ENCODE measurements at regions of chr14 and their contacts with region 1.

Region 1: GRCh38 chr14:20613094-20614037 is 22.2 kb upstream of the RNASE12 start:
- DNase-seq: peak; percentile 79
- ATAC-seq: peak; percentile 86 to 92
- H3K4me3 ChIP-seq: peak overlapping the region; percentile 52
- H3K27ac ChIP-seq: peak overlapping the region; percentile 61
- H3K4me1 ChIP-seq: peaks cover 21% of the 10 kb centered on the region
- H3K27me3 ChIP-seq: no peaks in the 10 kb centered on the region
- CTCF ChIP-seq: peak; percentile 64

Region 2: DNA sequence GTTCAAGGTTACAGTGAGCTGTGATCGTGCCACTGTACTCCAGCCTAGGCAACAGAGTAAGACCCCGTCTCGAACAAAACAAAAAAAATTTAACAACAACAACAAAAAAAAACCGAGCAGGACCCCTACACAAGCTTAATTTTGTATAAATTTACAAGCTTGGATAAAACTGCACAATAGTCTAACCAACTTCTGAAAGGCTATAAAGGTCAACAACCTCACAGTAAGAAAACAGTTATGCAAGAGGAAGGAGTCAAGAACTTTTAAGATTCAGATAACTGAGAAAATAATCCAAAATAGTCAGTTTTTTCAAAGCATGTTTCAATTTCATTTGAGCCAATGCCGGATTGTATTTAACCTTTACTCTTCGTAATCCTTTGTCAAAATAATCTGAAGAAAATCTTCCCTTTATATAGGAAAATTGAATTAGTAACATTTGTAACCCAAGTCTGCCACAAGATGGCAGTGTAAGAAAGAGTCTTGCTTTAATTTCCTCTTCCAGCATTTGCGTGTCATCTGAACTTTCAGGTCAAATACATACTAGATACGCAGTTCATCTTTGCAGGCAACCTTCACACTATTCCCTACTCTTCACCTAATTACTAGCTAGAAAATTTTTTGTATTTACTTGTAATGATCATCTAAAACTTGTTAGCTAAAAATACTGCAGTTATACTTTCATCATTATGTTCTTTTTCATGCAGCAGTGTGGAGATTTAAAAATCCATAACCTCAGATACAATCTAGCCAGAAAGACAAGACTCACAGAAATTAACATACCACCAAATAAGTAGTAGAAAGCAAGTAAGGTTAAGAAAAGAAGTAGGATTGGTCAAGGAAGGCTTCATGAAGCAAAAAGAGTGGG is 286.1 kb before region 1 on chr14:
- intact Hi-C with region 1: loop called (anchors 10 kb)
- DNase-seq: no peak
- ATAC-seq: peak; percentile 67 to 72
- H3K4me3 ChIP-seq: no peak overlapping the region
- H3K27ac ChIP-seq: no peak overlapping the region
- H3K4me1 ChIP-seq: peaks cover 17% of the 10 kb centered on the region
- H3K27me3 ChIP-seq: no peaks in the 10 kb centered on the region
- CTCF ChIP-seq: peak; percentile 73

Region 3: GRCh38 chr14:20530771-20531571 is 82.4 kb before region 1 on chr14:
- intact Hi-C with region 1: loop called (anchors 5 kb)
- DNase-seq: peak; percentile 81
- ATAC-seq: peak; percentile 61 to 77
- H3K4me3 ChIP-seq: no peak overlapping the region
- H3K27ac ChIP-seq: no peak overlapping the region
- H3K4me1 ChIP-seq: no peaks in the 10 kb centered on the region
- H3K27me3 ChIP-seq: no peaks in the 10 kb centered on the region
- CTCF ChIP-seq: peak; percentile 74